H1 (cell line): ENCODE measurements at regions of chr11 and their contacts with region 1.

Region 1: DNA sequence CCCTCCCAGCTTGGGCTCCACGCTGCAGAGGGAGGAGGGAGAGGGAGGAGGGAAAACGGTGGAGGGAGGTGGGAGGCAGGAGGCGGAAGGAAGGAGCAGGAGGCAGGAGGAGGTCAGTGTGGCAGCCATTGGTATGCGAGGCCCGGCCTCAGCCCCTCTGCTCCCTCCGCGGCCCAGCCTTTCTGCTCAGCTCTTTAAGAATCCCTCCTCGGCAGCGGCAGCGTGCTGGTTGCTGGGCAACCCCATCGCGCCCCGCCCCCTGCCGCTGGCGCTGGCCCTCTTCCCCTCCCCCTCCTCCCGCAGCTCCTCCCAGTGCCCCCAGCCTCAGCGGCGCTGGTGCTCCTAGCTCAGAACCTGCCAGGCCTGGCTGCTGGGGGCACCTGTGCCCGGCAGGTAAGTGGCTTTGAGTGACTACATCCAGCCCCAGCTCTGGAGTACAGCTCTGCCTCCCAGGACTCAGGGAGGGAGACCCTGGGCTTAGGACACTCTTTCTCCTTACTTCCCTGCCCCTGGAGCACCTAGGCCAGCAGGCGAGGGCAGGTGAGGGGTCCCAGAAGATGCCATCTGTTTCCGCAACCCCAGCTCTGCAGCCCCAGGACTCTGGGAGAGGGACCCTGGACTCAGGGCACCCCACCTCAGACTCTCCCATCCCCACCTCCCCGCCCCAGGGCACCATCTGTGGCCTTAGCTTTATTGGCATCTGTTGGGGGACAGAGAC is 7.2 kb upstream of the FLRT1 start:
- DNase-seq: peak; percentile 68 to 87
- H3K4me3 ChIP-seq: 0 out of 8 replicates have a peak overlapping the region, but pooled peaks of 1 of the 4 experiments have one; percentile 31
- H3K27ac ChIP-seq: 0 out of 2 replicates have a peak overlapping the region, but pooled peaks have one; percentile 36
- H3K4me1 ChIP-seq: peaks cover 15 to 43% (median 35%) of the 10 kb centered on the region in 4 experiments
- H3K27me3 ChIP-seq: peaks cover 11 to 47% (median 39%) of the 10 kb centered on the region in 4 experiments
- CTCF ChIP-seq: no peak
- EP300 ChIP-seq: no peak
- POLR2A ChIP-seq: no peak
- RAD21 ChIP-seq: no peak

Region 2: GRCh38 chr11:63929616-63930015 is 98.9 kb before region 1 on chr11:
- CTCF ChIA-PET with region 1: no interaction called
- POLR2A ChIA-PET with region 1: no interaction called
- DNase-seq: no peak
- H3K4me3 ChIP-seq: no peak overlapping the region
- H3K27ac ChIP-seq: no peak overlapping the region
- H3K4me1 ChIP-seq: peaks cover 0 to 4% (median 0%) of the 10 kb centered on the region in 4 experiments; a peak in 1 of 7 replicates
- H3K27me3 ChIP-seq: peaks cover 0 to 8% (median 5%) of the 10 kb centered on the region in 4 experiments; a peak in 3 of 7 replicates
- CTCF ChIP-seq: no peak
- EP300 ChIP-seq: no peak
- POLR2A ChIP-seq: no peak
- RAD21 ChIP-seq: no peak

Region 3: DNA sequence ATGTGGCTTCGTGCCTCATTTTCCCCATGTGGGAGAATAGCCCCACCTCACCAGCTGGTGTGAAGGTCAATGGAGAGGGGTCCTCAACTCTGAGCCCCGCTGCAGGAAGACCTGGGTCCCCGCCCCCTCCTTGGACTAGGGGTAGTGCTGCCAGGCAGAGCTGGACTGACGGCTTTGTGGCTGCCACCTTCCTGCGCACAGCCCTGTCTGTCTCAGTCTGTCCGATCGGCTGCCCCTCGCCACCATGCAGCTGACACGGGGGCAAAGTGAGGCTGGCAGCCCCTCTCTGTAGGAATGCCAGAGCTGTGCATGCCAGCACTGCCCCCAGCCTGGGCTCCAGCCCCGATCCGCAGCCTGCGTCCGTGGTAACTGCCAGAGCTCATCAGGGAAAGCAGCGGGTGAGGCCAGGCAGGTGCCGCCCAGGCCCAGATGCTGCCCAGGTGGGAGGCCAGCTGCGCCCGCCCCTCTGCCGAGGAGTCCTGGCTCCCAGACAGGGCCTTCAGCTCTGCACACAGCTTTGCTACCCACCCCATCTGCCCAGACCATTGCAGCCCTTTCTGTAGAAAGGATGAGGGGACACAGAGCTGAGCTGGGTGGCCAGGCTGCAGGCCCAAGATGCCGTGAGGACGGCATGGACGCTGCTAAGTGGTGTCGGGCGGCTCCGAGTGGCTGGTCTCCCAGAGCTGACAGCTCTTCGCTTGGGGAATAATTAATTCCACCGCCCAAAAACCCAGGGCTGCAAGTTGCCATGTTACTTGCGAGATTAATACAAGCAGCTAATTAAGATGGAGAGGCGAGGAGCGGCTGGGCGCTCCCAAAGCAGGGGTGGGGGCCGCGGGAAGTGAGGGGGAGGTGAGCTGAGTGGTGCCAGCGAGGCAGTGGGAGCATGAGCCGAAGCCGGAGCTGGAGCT is 12.4 kb before region 1 on chr11:
- CTCF ChIA-PET with region 1: interaction called, 19 read pairs
- POLR2A ChIA-PET with region 1: interaction called, 12 read pairs
- DNase-seq: no peak
- H3K4me3 ChIP-seq: no peak overlapping the region
- H3K27ac ChIP-seq: no peak overlapping the region
- H3K4me1 ChIP-seq: peaks cover 0 to 13% (median 7%) of the 10 kb centered on the region in 4 experiments; a peak in 6 of 7 replicates
- H3K27me3 ChIP-seq: peaks cover 2 to 56% (median 32%) of the 10 kb centered on the region in 4 experiments
- CTCF ChIP-seq: no peak
- EP300 ChIP-seq: no peak
- POLR2A ChIP-seq: no peak
- RAD21 ChIP-seq: no peak